ENCODE measurements at regions of chr3 and their contacts with region 1.

Region 1: GRCh38 chr3:163476183-163476582 is 1602.1 kb downstream of the SI start:
- DNase-seq: no peak
- ATAC-seq: no peak
- H3K4me3 ChIP-seq: no peak overlapping the region
- H3K27ac ChIP-seq: no peak overlapping the region
- H3K4me1 ChIP-seq: no peaks in the 10 kb centered on the region
- H3K27me3 ChIP-seq: no peaks in the 10 kb centered on the region
- CTCF ChIP-seq: peak; percentile 40; the same call in 1 of the 2 replicates

Region 2: GRCh38 chr3:163218336-163218735 is 257.8 kb before region 1 on chr3:
- CTCF ChIA-PET with region 1: no interaction called
- POLR2A ChIA-PET with region 1: no interaction called
- in situ Hi-C with region 1: no loop called
- intact Hi-C with region 1: no loop called
- DNase-seq: no peak
- ATAC-seq: no peak
- H3K4me3 ChIP-seq: no peak overlapping the region
- H3K27ac ChIP-seq: no peak overlapping the region
- H3K4me1 ChIP-seq: no peaks in the 10 kb centered on the region
- H3K27me3 ChIP-seq: no peaks in the 10 kb centered on the region
- CTCF ChIP-seq: no peak

Region 3: DNA sequence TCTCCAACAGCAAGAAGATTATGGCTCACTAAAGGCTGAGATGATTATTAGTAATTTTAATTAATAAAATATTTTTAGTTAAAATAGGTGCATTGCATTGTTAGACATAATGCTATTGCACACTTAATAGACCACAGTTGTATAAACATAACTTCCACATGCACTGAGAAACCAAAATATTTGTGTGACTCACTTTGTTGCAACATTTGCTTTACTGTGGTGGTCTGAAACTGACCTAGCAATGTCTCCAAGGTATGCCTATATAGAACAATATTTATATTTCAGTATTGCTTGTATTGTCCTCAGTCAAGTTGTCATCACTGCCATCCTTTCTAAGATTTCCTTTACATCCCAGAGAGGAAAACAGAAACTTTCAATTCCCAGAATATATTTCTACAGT is 387.0 kb after region 1 on chr3:
- CTCF ChIA-PET with region 1: no interaction called
- POLR2A ChIA-PET with region 1: interaction called, 11 read pairs
- in situ Hi-C with region 1: no loop called
- intact Hi-C with region 1: no loop called
- DNase-seq: no peak
- ATAC-seq: no peak
- H3K4me3 ChIP-seq: no peak overlapping the region
- H3K27ac ChIP-seq: no peak overlapping the region
- H3K4me1 ChIP-seq: no peaks in the 10 kb centered on the region
- H3K27me3 ChIP-seq: no peaks in the 10 kb centered on the region
- CTCF ChIP-seq: no peak